ENCODE measurements at regions of chr14 and their contacts with region 1.

Region 1: GRCh38 chr14:36647824-36648753 is 13.6 kb upstream of the PAX9 start:
- DNase-seq: no peak
- H3K4me3 ChIP-seq: peak overlapping the region; percentile 41 to 82 (median 61)
- H3K27ac ChIP-seq: no peak overlapping the region
- H3K4me1 ChIP-seq: peaks cover 7% of the 10 kb centered on the region
- H3K27me3 ChIP-seq: peaks cover 66% of the 10 kb centered on the region
- CTCF ChIP-seq: peak; percentile 48 to 84 (median 75)

Region 2: GRCh38 chr14:36941783-36942521 is 293.9 kb after region 1 on chr14:
- dilution Hi-C with region 1: loop called (anchors 25 kb)
- DNase-seq: peak; percentile 33
- H3K4me3 ChIP-seq: no peak overlapping the region
- H3K27ac ChIP-seq: no peak overlapping the region
- H3K4me1 ChIP-seq: peaks cover 9% of the 10 kb centered on the region
- H3K27me3 ChIP-seq: no peaks in the 10 kb centered on the region
- CTCF ChIP-seq: peak; percentile 86 to 96 (median 95)

Region 3: GRCh38 chr14:37116933-37117849 is 469.1 kb after region 1 on chr14:
- dilution Hi-C with region 1: loop called (anchors 25 kb)
- DNase-seq: no peak
- H3K4me3 ChIP-seq: no peak overlapping the region
- H3K27ac ChIP-seq: no peak overlapping the region
- H3K4me1 ChIP-seq: peaks cover 15% of the 10 kb centered on the region
- H3K27me3 ChIP-seq: no peaks in the 10 kb centered on the region
- CTCF ChIP-seq: peak in 2 of 3 experiments; percentile 39 to 46

Measured in keratinocyte (primary cell).